IMR-90 (cell line): ENCODE measurements at regions of chr7 and their contacts with region 1.

Region 1: GRCh38 chr7:130486114-130486958 is 5.5 kb upstream of the MEST start:
- DNase-seq: no peak
- ATAC-seq: no peak
- H3K4me3 ChIP-seq: no peak overlapping the region
- H3K27ac ChIP-seq: no peak overlapping the region
- H3K4me1 ChIP-seq: peaks cover 7% of the 10 kb centered on the region
- H3K27me3 ChIP-seq: peaks cover 5% of the 10 kb centered on the region
- CTCF ChIP-seq: 0 out of 2 replicates have a peak, but pooled peaks have one; percentile 20
- POLR2A ChIP-seq: no peak
- RAD21 ChIP-seq: no peak

Region 2: DNA sequence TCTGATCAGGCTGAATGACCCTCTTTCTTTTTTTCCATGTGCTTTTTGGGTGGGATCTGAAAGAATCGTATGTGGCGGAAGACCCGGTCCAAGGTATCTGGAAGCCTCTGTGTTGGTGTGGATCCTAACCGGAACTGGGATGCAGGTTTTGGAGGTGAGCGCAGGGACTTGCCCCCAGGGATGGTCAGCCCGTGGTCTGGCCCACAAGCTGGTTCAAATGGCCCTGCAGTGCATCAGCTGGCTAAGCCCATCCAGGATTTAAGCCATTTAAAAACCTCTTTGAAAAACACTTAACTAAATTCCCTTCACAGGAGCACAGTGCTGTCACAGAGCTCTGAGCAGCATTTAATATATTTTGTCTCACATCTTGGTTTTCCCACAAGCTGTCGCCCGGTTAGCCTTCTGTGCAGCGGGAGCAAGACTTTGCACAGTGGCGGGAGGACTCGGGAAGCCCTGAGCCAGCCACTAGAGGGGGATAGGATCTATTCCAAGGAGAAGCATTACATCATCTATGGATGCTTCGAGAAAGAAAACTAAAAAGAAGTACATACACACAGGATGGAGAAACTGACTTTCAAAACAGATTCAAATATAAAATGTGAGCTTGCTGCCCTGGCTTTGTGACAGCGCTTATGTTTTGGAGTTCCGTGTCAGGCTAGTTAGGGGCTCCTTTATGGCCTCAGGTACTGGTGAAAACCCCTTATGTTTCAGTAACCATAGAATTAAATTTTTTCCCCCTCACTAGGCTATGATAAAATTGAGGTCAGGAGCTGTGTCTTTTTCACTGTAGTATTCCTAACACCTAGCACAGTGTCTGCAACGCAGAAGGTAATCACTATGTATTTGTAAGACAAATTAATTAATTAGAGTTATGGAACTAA is 208.3 kb before region 1 on chr7:
- CTCF ChIA-PET with region 1: no interaction called
- POLR2A ChIA-PET with region 1: no interaction called
- dilution Hi-C with region 1: no loop called
- in situ Hi-C with region 1: no loop called
- intact Hi-C with region 1: loop called (anchors 1 kb)
- DNase-seq: peak; percentile 69
- ATAC-seq: peak; percentile 50
- H3K4me3 ChIP-seq: no peak overlapping the region
- H3K27ac ChIP-seq: no peak overlapping the region
- H3K4me1 ChIP-seq: peaks cover 11% of the 10 kb centered on the region
- H3K27me3 ChIP-seq: no peaks in the 10 kb centered on the region
- CTCF ChIP-seq: peak; percentile 57
- POLR2A ChIP-seq: no peak
- RAD21 ChIP-seq: peak; percentile 55

Region 3: GRCh38 chr7:130356121-130356875 is 130.0 kb before region 1 on chr7:
- CTCF ChIA-PET with region 1: no interaction called
- POLR2A ChIA-PET with region 1: no interaction called
- dilution Hi-C with region 1: no loop called
- in situ Hi-C with region 1: no loop called
- intact Hi-C with region 1: loop called (anchors 10 kb)
- DNase-seq: peak; percentile 99
- ATAC-seq: peak; percentile 89
- H3K4me3 ChIP-seq: no peak overlapping the region
- H3K27ac ChIP-seq: peak overlapping the region; percentile 96
- H3K4me1 ChIP-seq: peaks cover 29% of the 10 kb centered on the region
- H3K27me3 ChIP-seq: no peaks in the 10 kb centered on the region
- CTCF ChIP-seq: no peak
- POLR2A ChIP-seq: peak; percentile 70; the same call in 1 of the 2 replicates
- RAD21 ChIP-seq: peak; percentile 30; the same call in 1 of the 2 replicates

Region 4: GRCh38 chr7:130430841-130431666 is 55.3 kb before region 1 on chr7:
- CTCF ChIA-PET with region 1: no interaction called
- POLR2A ChIA-PET with region 1: interaction called, 3 read pairs
- dilution Hi-C with region 1: no loop called
- in situ Hi-C with region 1: no loop called
- intact Hi-C with region 1: loop called (anchors 5 kb)
- DNase-seq: peak; percentile 86
- ATAC-seq: peak; percentile 82
- H3K4me3 ChIP-seq: peak overlapping the region; percentile 44
- H3K27ac ChIP-seq: peak overlapping the region; percentile 86
- H3K4me1 ChIP-seq: peaks cover 13% of the 10 kb centered on the region
- H3K27me3 ChIP-seq: no peaks in the 10 kb centered on the region
- CTCF ChIP-seq: no peak
- POLR2A ChIP-seq: no peak
- RAD21 ChIP-seq: no peak

Region 5: DNA sequence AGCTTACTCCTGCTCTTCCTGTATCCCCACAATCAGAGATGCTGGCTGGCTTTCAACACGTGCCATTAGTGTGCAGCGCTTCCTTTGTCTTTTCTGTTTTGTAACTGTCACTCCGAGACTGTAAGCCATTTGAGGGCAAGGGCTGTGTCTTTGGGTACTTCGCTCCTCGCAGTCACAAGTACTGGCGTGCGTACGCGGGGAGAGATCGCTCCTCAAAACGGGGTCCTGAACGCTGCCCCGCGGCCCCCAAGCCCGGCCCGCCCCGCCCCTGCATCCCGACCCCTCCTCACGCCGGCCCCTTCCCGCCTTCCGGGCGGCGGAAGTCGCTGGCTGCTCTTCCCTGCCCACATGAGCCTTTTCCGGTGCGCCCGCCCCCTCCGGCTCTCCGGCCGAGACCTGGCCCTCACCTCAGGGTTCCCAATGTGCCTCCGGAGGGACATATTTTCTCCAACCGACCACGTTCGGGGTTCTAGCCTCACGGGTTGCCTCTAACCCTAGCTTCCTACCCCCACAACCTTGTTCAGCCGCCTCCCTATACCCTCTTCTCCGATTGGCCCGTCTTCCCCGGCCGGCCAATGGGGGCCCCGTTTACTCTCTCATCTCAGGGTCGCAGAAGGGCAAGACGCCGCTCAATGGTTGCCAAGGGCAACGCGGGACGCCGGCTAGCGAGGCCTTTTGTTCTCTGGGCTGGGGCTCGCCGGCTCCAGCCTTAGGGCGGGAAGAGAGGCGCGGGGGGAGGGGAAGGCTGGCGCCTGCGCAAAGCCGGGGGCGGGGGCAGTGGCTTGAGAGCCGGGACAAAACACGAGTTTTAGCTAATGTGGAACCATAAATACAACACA is 45.6 kb before region 1 on chr7 and contains the start of gene CEP41:
- CTCF ChIA-PET with region 1: no interaction called
- POLR2A ChIA-PET with region 1: no interaction called
- dilution Hi-C with region 1: no loop called
- in situ Hi-C with region 1: no loop called
- intact Hi-C with region 1: loop called (anchors 5 kb)
- DNase-seq: peak; percentile 96
- ATAC-seq: peak; percentile 99
- H3K4me3 ChIP-seq: peak within 1 kb of the TSS; percentile 72
- H3K27ac ChIP-seq: peak within 1 kb of the TSS; percentile 99
- H3K4me1 ChIP-seq: peaks cover 6% of the 10 kb centered on the region
- H3K27me3 ChIP-seq: no peaks in the 10 kb centered on the region
- CTCF ChIP-seq: no peak
- POLR2A ChIP-seq: no peak
- RAD21 ChIP-seq: no peak
- total RNA-seq, gene CEP41: 11.1 and 12.2 TPM in 2 replicates